Endothelial cell of umbilical vein (primary cell): ENCODE measurements at regions of chr2 and their contacts with region 1.

Region 1: GRCh38 chr2:132547074-132547687 is 122.8 kb downstream of the LYPD1 start:
- DNase-seq: peak; percentile 56
- H3K4me3 ChIP-seq: no peak overlapping the region
- H3K27ac ChIP-seq: no peak overlapping the region
- H3K4me1 ChIP-seq: no peaks in the 10 kb centered on the region
- H3K27me3 ChIP-seq: no peaks in the 10 kb centered on the region
- CTCF ChIP-seq: peak; percentile 53 to 58
- POLR2A ChIP-seq: no peak

Region 2: GRCh38 chr2:132267105-132267497 is 280.1 kb before region 1 on chr2:
- CTCF ChIA-PET with region 1: no interaction called
- POLR2A ChIA-PET with region 1: no interaction called
- dilution Hi-C with region 1: no loop called
- intact Hi-C with region 1: loop called (anchors 2 kb)
- DNase-seq: no peak
- H3K4me3 ChIP-seq: no peak overlapping the region
- H3K27ac ChIP-seq: no peak overlapping the region
- H3K4me1 ChIP-seq: peaks cover 4% of the 10 kb centered on the region
- H3K27me3 ChIP-seq: no peaks in the 10 kb centered on the region
- CTCF ChIP-seq: no peak
- POLR2A ChIP-seq: no peak

Region 3: GRCh38 chr2:132562245-132562644 is 15.1 kb after region 1 on chr2:
- CTCF ChIA-PET with region 1: interaction called, 5 read pairs
- POLR2A ChIA-PET with region 1: no interaction called
- dilution Hi-C with region 1: no loop called
- intact Hi-C with region 1: loop called (anchors 1 kb)
- DNase-seq: no peak
- H3K4me3 ChIP-seq: no peak overlapping the region
- H3K27ac ChIP-seq: no peak overlapping the region
- H3K4me1 ChIP-seq: no peaks in the 10 kb centered on the region
- H3K27me3 ChIP-seq: no peaks in the 10 kb centered on the region
- CTCF ChIP-seq: no peak
- POLR2A ChIP-seq: no peak

Region 4: DNA sequence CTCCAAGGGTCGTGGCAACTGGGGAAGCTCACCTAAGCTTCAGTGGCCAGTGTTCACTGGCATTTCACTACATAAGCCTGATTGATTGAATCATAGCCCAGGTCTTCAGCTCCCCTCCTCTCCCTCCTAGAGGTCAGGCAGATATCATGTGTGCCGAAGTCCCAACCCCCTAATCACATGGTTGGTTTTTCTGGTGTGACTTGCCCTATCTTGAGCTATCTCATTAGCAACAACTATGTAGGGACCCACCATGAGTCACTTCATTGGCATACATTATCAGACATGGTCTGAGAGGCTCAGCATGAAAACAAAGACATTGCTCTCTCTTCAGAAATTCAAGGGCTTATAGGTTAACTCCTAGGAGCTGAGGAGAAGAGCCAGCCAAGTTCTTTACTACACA is 46.0 kb after region 1 on chr2:
- CTCF ChIA-PET with region 1: no interaction called
- POLR2A ChIA-PET with region 1: no interaction called
- dilution Hi-C with region 1: no loop called
- intact Hi-C with region 1: no loop called
- DNase-seq: no peak
- H3K4me3 ChIP-seq: no peak overlapping the region
- H3K27ac ChIP-seq: no peak overlapping the region
- H3K4me1 ChIP-seq: no peaks in the 10 kb centered on the region
- H3K27me3 ChIP-seq: no peaks in the 10 kb centered on the region
- CTCF ChIP-seq: no peak
- POLR2A ChIP-seq: no peak

Region 5: DNA sequence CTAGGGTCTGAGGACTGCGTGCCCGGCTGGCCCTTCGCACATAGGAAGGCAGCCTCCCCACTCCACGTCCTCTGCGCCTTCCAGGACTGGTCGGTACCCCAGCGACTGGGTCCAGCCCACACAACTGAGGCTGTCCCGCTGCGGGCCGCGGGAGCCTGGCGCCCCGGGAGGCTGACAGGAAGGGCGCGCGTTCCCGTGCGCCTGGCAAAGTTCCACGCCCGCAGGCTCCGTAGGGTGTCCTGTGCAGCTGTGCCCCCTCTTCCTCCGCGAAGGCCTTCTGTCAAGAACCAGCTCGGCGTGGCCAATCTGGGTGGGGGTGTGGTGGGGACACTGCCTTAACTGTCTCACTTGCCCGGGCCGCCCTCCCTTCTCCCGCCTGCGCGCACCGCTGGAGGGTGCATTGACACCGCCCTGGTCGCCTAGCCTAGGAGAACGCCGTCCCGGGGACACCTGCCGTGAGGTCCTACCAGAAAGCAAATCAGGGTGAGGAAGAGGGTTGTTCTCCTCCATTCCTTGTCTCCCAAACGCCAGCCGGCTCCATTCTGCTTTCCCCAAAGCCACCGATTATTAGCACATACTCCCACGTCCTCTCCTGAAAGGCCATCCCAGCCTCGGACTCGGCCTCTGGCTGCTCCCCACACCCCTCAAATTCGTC is 123.4 kb after region 1 on chr2:
- CTCF ChIA-PET with region 1: interaction called, 3 read pairs
- POLR2A ChIA-PET with region 1: no interaction called
- dilution Hi-C with region 1: no loop called
- intact Hi-C with region 1: loop called (anchors 5 kb)
- DNase-seq: peak; percentile 44
- H3K4me3 ChIP-seq: peak overlapping the region; percentile 55 to 76 (median 75)
- H3K27ac ChIP-seq: peak overlapping the region; percentile 69
- H3K4me1 ChIP-seq: peaks cover 30% of the 10 kb centered on the region
- H3K27me3 ChIP-seq: no peaks in the 10 kb centered on the region
- CTCF ChIP-seq: no peak
- POLR2A ChIP-seq: peak; percentile 54

Region 6: DNA sequence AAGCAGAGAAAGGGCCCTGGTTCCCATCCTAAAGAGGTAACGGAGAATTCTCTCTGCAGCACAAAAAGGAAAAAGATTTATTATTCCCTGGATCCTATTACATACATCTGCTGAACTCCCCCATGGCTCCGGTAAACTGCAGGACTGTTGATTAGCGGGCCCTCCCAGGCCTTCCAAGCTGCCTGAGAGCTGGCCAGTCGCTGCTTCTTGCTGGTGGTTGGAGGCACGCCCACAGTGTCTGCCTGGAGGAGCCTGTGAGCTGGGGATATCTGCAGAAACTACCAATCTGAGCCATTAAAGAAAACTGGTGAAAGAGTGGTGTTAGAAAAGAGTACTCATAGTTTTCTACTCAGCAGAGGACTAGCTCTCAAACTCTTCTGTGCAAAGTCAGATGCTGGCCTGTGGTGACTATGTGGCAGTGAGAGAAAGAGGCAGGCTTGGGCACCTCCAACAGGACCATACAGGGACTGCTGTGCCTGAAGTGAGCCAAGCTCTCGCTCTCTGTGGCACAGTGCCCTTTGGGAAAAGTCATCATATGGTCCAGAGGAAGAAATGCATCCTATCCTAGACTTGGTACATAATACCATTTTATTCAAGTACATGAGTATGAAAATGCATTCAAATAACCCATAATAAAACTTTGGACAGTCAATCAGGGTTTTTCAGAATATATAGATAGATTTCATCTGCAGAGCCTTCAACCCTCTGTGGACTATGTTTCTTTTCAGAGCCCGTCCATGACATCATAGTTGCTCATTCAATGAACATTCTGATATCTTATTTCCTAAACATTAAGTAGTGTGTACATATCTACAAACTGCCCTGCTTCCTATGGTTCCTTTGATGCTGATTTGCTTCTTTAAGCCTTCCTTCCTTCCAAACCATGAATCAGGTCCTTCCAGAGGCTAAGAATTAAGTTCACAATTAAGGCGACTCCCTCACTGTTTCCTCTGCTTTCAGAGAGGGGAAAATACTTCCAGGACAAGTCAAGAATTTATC is 364.8 kb after region 1 on chr2:
- CTCF ChIA-PET with region 1: no interaction called
- POLR2A ChIA-PET with region 1: no interaction called
- dilution Hi-C with region 1: no loop called
- intact Hi-C with region 1: no loop called
- DNase-seq: no peak
- H3K4me3 ChIP-seq: no peak overlapping the region
- H3K27ac ChIP-seq: no peak overlapping the region
- H3K4me1 ChIP-seq: no peaks in the 10 kb centered on the region
- H3K27me3 ChIP-seq: no peaks in the 10 kb centered on the region
- CTCF ChIP-seq: no peak
- POLR2A ChIP-seq: no peak

Region 7: GRCh38 chr2:133163111-133163510 is 615.9 kb after region 1 on chr2:
- CTCF ChIA-PET with region 1: interaction called, 221 read pairs
- POLR2A ChIA-PET with region 1: no interaction called
- dilution Hi-C with region 1: no loop called
- intact Hi-C with region 1: no loop called
- DNase-seq: no peak
- H3K4me3 ChIP-seq: no peak overlapping the region
- H3K27ac ChIP-seq: no peak overlapping the region
- H3K4me1 ChIP-seq: no peaks in the 10 kb centered on the region
- H3K27me3 ChIP-seq: no peaks in the 10 kb centered on the region
- CTCF ChIP-seq: no peak
- POLR2A ChIP-seq: no peak